ENCODE measurements at regions of chr14 and their contacts with region 1.

Region 1: GRCh38 chr14:52769887-52770286 is 21.5 kb downstream of the GNPNAT1 start:
- H3K4me3 Mint-ChIP-seq: no peak overlapping the region
- H3K27ac Mint-ChIP-seq: no peak overlapping the region
- H3K4me1 Mint-ChIP-seq: no peaks in the 10 kb centered on the region
- H3K27me3 Mint-ChIP-seq: no peaks in the 10 kb centered on the region

Region 2: DNA sequence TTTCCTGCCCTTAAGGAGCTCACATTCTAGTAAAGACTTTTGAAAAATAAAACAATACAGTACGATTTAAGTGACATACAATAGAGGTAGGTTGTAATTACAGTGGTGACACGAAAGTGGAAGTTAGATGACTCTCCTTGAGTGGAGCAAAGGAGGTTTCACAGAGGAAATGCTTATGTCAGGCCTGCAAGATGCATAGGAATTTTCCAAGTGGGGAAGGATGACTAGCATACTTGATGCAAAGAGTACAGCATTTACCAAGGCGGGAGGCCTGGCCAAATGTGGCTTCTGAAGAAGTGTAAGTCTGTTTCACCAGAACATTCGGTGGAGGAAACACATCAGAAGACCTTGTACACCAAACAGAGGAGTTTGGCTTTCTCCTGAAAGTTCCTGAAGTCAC is 129.8 kb before region 1 on chr14:
- intact Hi-C with region 1: no loop called
- H3K4me3 Mint-ChIP-seq: no peak overlapping the region
- H3K27ac Mint-ChIP-seq: no peak overlapping the region
- H3K4me1 Mint-ChIP-seq: peaks cover 9% of the 10 kb centered on the region
- H3K27me3 Mint-ChIP-seq: no peaks in the 10 kb centered on the region

Region 3: DNA sequence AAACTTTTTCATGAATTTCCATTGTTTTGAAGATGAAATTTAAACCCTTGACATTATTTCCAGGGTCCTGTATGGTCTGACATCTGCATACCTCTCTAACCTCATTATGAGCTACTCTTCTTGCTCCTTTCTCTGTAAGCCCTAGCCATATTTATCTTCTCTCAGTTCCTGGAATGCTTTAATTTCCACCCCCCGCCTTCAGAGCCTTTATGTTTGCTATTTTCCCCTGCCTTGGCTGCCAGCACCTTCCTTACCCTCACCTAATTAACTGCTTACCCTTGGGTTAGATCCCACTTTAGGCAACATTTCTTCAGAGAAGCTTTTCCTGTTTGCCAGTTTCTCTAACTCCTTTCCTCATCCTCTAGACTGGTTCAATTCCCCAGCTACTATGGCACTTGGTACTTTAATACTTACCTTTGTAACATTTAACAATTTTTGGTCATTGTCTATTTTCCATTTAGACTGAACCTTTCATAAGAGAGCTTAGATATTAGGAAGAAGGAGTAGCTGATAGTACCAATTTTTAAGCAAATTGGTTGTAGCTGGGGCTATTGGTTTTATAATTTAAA is 33.9 kb before region 1 on chr14:
- intact Hi-C with region 1: loop called (anchors 5 kb)
- H3K4me3 Mint-ChIP-seq: no peak overlapping the region
- H3K27ac Mint-ChIP-seq: no peak overlapping the region
- H3K4me1 Mint-ChIP-seq: peaks cover 35% of the 10 kb centered on the region
- H3K27me3 Mint-ChIP-seq: no peaks in the 10 kb centered on the region